Heart right ventricle (tissue), 16 donors: ENCODE measurements at regions of chr20 and their contacts with region 1.

Region 1: DNA sequence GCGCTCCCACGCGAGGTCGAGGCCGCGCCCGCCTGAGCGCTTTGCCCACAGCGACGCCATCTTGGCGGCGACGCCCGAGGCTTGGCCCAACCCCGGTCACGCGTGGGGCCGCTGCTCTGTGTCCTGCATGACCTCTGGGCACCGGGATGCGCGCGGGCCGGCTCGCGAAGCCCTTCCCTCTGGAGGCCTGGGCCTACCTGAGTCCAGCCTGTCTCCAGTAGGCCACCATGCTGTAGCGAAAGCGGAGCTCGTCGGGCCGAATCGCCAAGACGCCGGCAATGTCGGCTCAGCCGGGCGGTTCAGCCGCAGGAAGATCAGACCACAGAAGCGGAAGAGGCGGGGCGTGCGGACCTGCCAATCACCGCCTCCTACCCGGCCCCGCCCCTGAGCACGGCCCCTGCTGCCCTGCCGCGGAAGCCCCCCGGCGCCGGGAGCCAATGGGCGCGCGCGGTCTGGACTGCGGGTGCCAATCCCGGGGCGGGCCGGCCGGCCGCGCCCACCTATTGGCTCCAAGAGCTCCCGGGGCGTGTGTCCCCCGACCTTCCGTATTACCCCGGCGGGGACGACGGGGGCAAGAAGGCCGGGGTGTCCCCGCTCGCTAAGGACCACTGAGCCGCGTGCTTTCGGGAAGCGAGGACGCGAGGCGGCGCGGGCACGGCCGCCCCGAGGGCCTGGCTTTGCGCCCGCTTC is at the start of gene ATP5F1E:
- DNase-seq: peak; percentile 95 to 97
- ATAC-seq: peak; percentile 99 to 100 (median 100)
- H3K4me3 ChIP-seq: peak within 1 kb of the TSS; percentile 55 to 96 (median 82)
- H3K27ac ChIP-seq: peak within 1 kb of the TSS; percentile 83 to 96 (median 94)
- H3K4me1 ChIP-seq: peaks cover 17 to 56% (median 47%) of the 10 kb centered on the region in 9 donors
- H3K27me3 ChIP-seq: no peaks in the 10 kb centered on the region
- CTCF ChIP-seq: no peak
- total RNA-seq, gene ATP5F1E: 105 to 155 (median 121) TPM

Region 2: GRCh38 chr20:58688840-58689239 is 343.3 kb before region 1 on chr20:
- intact Hi-C with region 1: no loop called
- DNase-seq: no peak
- ATAC-seq: peak in 1 of 8 donors; percentile 27
- H3K4me3 ChIP-seq: no peak overlapping the region
- H3K27ac ChIP-seq: peak overlapping the region in 2 of 10 donors; percentile 22 to 26
- H3K4me1 ChIP-seq: peaks cover 8 to 38% (median 27%) of the 10 kb centered on the region in 9 donors
- H3K27me3 ChIP-seq: no peaks in the 10 kb centered on the region
- CTCF ChIP-seq: no peak

Region 3: GRCh38 chr20:58907399-58908137 is 124.6 kb before region 1 on chr20:
- intact Hi-C with region 1: loop called in 3 of 10 experiments (anchors 5 kb)
- DNase-seq: peak; percentile 72 to 97
- ATAC-seq: peak; percentile 91 to 98 (median 97)
- H3K4me3 ChIP-seq: peak overlapping the region in 8 of 10 donors; percentile 6 to 44 (median 32)
- H3K27ac ChIP-seq: peak overlapping the region; percentile 44 to 93 (median 82)
- H3K4me1 ChIP-seq: peaks cover 16 to 76% (median 51%) of the 10 kb centered on the region in 9 donors
- H3K27me3 ChIP-seq: no peaks in the 10 kb centered on the region
- CTCF ChIP-seq: no peak

Region 4: DNA sequence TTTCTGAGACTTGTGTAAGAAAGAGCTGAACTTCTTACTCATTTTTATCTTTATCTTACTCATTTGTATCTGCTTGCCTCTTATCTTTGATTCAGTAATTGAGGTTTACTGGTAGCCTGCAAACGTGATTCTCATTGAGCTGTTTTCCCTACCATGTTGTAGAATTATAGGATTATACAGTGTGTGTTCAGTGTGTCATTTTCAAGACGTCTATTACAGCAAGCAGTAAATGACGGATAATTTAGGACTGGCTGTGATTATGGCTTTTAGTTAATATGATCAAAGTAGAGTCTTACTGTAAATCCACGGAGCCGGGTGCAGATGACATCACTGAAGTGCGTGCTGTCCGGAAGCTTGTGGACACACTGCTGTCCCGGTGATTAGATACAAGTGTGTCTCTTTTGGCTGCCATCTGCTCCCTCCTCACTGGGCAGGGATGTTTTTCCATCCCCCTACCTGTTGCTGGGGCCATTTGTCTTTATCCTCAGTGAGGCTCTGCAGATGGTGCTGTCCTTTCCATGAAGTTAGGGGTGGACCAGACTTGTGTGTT is 45.1 kb before region 1 on chr20:
- intact Hi-C with region 1: loop called in 4 of 10 experiments (anchors 2 to 10 kb)
- DNase-seq: no peak
- ATAC-seq: no peak
- H3K4me3 ChIP-seq: no peak overlapping the region
- H3K27ac ChIP-seq: no peak overlapping the region
- H3K4me1 ChIP-seq: peaks cover 0 to 39% (median 31%) of the 10 kb centered on the region in 9 donors
- H3K27me3 ChIP-seq: no peaks in the 10 kb centered on the region
- CTCF ChIP-seq: no peak